ENCODE measurements at regions of chr2 and their contacts with region 1.

Region 1: GRCh38 chr2:62141142-62141740 is 54.7 kb upstream of the B3GNT2 start:
- DNase-seq: no peak
- ATAC-seq: no peak
- H3K4me3 ChIP-seq: no peak overlapping the region
- H3K27ac ChIP-seq: no peak overlapping the region
- H3K4me1 ChIP-seq: no peaks in the 10 kb centered on the region
- H3K27me3 ChIP-seq: no peaks in the 10 kb centered on the region
- CTCF ChIP-seq: no peak

Region 2: DNA sequence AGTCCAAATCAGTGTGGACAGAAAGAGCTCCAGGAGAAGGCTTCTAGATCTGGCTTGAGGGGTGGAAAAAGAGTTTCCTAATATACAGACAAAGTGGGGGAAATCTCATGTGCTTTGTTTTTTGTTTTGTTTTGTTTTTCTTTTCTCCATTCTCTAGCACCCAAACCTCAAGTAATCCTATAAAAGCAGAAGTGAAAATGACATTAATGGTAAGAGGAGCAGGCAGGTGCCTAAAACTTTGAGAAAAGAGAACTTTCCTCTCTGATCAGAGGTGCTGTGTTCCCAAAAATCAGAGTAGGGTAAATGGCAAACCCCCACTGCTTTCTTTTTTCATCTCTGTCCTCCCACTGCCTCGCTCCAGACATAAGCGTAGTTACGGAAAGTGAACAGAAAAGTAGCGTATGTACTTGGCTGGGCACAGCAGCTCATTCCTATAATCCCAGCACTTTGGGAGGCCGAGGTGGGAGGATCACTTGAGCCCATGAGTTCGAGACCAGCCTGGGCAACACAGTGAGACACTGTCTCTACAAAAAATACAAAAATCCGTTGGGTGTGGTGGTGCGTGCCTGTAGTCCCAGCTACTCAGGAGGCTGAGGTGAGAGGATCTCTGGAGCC is 365.2 kb before region 1 on chr2:
- CTCF ChIA-PET with region 1: no interaction called
- POLR2A ChIA-PET with region 1: no interaction called
- in situ Hi-C with region 1: no loop called
- intact Hi-C with region 1: no loop called
- DNase-seq: no peak
- ATAC-seq: no peak
- H3K4me3 ChIP-seq: no peak overlapping the region
- H3K27ac ChIP-seq: no peak overlapping the region
- H3K4me1 ChIP-seq: no peaks in the 10 kb centered on the region
- H3K27me3 ChIP-seq: no peaks in the 10 kb centered on the region
- CTCF ChIP-seq: no peak

Region 3: DNA sequence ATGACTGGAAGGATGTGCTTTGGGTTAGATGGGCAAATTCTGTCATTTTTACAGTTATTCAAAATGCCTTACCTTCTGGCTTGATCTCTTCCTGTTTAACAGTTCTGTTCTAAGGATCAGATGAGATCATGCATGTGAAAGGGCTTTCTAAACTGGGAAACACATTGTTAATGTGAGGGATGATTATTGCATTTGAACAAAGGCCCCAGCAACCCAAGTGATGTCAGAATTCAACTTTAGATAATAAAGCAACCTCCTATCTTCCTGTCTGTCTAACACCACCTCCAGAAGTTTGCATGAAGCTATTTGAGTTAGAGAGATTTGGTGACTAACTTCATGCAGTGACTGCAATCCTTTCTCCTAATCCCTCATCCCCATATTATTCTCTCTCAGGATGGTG is 23.1 kb before region 1 on chr2:
- CTCF ChIA-PET with region 1: no interaction called
- POLR2A ChIA-PET with region 1: no interaction called
- in situ Hi-C with region 1: no loop called
- intact Hi-C with region 1: no loop called
- DNase-seq: no peak
- ATAC-seq: no peak
- H3K4me3 ChIP-seq: no peak overlapping the region
- H3K27ac ChIP-seq: no peak overlapping the region
- H3K4me1 ChIP-seq: no peaks in the 10 kb centered on the region
- H3K27me3 ChIP-seq: no peaks in the 10 kb centered on the region
- CTCF ChIP-seq: no peak

Region 4: DNA sequence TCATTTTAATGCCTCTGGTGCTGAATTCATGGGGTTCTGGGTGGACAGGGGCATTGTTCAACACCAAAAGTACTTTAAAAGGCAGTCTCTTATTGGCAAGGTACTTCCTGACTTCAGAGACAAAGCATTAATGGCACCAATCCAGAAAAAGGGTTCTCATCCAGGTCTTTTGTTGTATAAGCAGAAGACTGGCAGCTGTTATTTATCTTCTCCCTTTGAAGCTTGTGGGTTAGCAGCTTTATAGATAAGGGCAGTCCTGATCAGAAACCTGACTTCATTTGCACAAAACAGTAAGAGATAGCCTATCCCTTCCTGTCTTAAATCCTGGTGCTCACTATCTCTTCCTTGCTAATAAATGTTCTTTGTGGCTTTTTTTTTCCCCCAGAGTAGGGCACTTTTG is 1809.2 kb after region 1 on chr2:
- CTCF ChIA-PET with region 1: no interaction called
- POLR2A ChIA-PET with region 1: interaction called, 17 read pairs
- in situ Hi-C with region 1: no loop called
- intact Hi-C with region 1: no loop called
- DNase-seq: no peak
- ATAC-seq: no peak
- H3K4me3 ChIP-seq: no peak overlapping the region
- H3K27ac ChIP-seq: no peak overlapping the region
- H3K4me1 ChIP-seq: no peaks in the 10 kb centered on the region
- H3K27me3 ChIP-seq: no peaks in the 10 kb centered on the region
- CTCF ChIP-seq: no peak